Posterior vena cava (tissue), 2 donors: ENCODE measurements at regions of chr3 and their contacts with region 1.

Region 1: DNA sequence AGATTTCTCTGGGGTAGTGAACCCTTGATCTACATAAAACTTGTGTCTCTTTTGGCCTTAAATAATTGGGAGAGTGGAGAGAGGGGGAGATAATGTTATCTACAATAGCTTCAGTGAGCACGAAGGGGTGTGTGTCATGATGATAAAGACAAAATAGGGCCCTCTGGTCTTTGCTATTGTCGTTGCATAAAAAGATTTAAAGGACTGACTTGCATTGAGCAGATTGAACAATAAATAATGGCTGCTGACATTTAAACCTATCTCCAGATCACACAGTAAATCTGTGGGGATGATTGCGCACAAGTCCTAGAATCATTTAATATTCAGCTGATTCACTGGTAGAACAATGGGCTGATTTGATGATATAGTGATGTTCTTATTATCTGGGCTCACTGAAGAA is 71.3 kb upstream of the GAP43 start:
- DNase-seq: no peak

Region 2: GRCh38 chr3:115580566-115580965 is 28.6 kb after region 1 on chr3:
- intact Hi-C with region 1: loop called in 1 of 2 experiments (anchors 1 kb)
- DNase-seq: no peak